Activated CD4-positive, alpha-beta T cell treated with anti-CD3 and anti-CD28 coated beads for 36 hours (primary cell): ENCODE measurements at regions of chr18 and their contacts with region 1.

Region 1: GRCh38 chr18:79361766-79362522 is 33.8 kb upstream of the NFATC1 start:
- DNase-seq: no peak
- ATAC-seq: no peak
- H3K4me3 Mint-ChIP-seq: no peak overlapping the region
- H3K27ac Mint-ChIP-seq: no peak overlapping the region
- H3K4me1 Mint-ChIP-seq: no peaks in the 10 kb centered on the region
- H3K27me3 Mint-ChIP-seq: no peaks in the 10 kb centered on the region

Region 2: GRCh38 chr18:79378542-79379250 is 16.8 kb after region 1 on chr18:
- CTCF ChIA-PET with region 1: interaction called, 10 read pairs
- POLR2A ChIA-PET with region 1: no interaction called
- intact Hi-C with region 1: no loop called
- DNase-seq: peak; percentile 92
- ATAC-seq: peak; percentile 93
- H3K4me3 Mint-ChIP-seq: no peak overlapping the region
- H3K27ac Mint-ChIP-seq: peak overlapping the region; percentile 58
- H3K4me1 Mint-ChIP-seq: peaks cover 10% of the 10 kb centered on the region
- H3K27me3 Mint-ChIP-seq: no peaks in the 10 kb centered on the region